CD8-positive, alpha-beta memory T cell (primary cell): ENCODE measurements at regions of chr1 and their contacts with region 1.

Region 1: DNA sequence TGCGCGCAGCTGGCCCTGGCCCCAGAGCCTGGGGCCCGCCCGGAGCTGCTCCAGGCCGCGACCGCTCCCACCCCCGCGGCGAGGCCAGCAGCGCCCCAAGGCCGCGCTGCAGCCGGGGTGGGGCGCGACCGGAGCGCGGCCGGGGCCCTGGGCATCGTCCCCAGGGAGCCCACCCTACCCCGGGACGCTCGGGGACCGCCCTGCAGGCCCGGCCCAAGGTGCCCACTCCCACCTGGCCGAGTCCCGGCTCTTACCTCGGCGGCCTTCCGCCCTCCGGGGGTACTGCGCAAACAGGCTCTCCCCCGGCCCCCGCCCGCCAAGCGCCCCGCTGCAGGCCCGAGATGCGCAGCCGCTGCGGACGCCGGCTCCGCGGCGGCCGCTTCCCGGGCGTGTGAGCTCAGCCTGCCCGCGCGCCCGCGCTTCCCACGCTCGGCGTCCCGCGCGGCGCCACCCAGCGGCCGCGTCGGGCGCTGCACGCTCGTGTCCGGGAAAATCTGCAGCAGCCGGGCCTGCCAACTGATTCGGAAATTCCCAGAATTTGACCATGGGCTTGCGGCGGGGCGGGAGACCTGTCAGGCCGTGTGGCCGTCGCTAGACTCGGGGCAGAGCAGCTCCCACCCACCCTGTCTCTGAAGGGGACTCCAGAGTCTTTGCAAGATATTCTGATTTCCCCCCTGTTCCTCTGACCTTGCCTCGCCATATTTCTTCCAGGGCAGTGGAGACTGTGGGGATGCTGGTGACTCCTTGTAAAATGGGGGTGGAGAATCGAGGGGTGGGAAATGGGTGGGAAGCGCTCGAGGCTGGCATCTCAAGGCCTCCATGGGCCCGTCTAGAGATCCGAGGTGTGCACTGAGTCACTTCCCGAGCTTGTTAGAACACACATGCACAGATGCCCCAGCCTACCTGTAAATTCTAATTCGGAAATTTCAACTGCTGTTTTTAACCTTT is 41.9 kb downstream of the CD34 start:
- DNase-seq: peak; percentile 66 to 81 (median 74)
- H3K4me3 ChIP-seq: peak overlapping the region; percentile 71
- H3K4me3 Mint-ChIP-seq: peak overlapping the region; percentile 93 to 98 (median 96)
- H3K27ac ChIP-seq: peak overlapping the region; percentile 83
- H3K27ac Mint-ChIP-seq: peak overlapping the region; percentile 66 to 97 (median 92)
- H3K4me1 ChIP-seq: peaks cover 84% of the 10 kb centered on the region
- H3K4me1 Mint-ChIP-seq: peaks cover 47 to 84% (median 48%) of the 10 kb centered on the region in 3 donors
- H3K27me3 ChIP-seq: no peaks in the 10 kb centered on the region
- H3K27me3 Mint-ChIP-seq: peaks cover 0 to 1% of the 10 kb centered on the region in 2 donors

Region 2: GRCh38 chr1:207762622-207763021 is 106.4 kb before region 1 on chr1:
- CTCF ChIA-PET with region 1: no interaction called
- POLR2A ChIA-PET with region 1: no interaction called
- DNase-seq: no peak
- H3K4me3 ChIP-seq: no peak overlapping the region
- H3K4me3 Mint-ChIP-seq: no peak overlapping the region
- H3K27ac ChIP-seq: no peak overlapping the region
- H3K27ac Mint-ChIP-seq: peak overlapping the region in 1 of 8 donors; percentile 33
- H3K4me1 ChIP-seq: no peaks in the 10 kb centered on the region
- H3K4me1 Mint-ChIP-seq: peaks cover 2 to 11% (median 11%) of the 10 kb centered on the region in 3 donors
- H3K27me3 ChIP-seq: no peaks in the 10 kb centered on the region
- H3K27me3 Mint-ChIP-seq: no peaks in the 10 kb centered on the region

Region 3: DNA sequence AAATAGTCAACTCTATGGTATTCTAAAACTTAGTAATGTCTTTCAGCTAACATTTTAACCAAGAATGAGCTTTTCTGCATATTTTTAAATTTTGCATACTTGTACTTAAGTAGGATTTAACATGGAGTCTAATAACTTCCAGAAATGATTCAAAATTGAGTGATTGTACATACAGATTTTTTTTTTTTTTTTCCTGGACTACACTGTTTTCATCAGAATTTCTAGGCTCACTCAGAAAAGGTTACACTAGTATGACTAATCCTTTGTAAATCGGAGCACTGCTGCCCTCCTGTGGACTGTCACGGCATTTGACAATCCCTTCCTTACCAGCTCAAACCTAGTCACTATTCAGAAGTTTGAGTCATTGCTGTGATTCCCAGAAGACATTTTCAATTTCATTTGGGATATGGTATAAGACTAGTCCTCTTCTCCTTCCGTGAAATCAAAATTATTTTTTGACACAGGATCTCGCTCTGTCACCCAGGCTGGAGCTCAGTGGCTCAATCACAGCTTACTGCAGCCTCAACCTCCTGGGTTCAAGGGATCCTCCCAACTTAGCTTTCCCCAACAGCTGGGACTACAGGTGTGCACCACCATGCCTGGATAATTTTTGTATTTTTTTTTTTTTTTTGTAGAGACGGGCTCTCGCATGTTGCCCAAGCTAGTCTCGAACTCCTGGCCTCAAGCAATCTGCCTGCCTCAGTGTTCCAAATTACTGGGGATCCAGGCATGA is 71.7 kb before region 1 on chr1:
- CTCF ChIA-PET with region 1: interaction called, 28 read pairs
- POLR2A ChIA-PET with region 1: interaction called, 3 read pairs
- DNase-seq: peak; percentile 39 to 82 (median 55)
- H3K4me3 ChIP-seq: no peak overlapping the region
- H3K4me3 Mint-ChIP-seq: no peak overlapping the region
- H3K27ac ChIP-seq: no peak overlapping the region
- H3K27ac Mint-ChIP-seq: peak overlapping the region in 2 of 8 donors; percentile 6 to 40
- H3K4me1 ChIP-seq: peaks cover 23% of the 10 kb centered on the region
- H3K4me1 Mint-ChIP-seq: peaks cover 41 to 51% (median 48%) of the 10 kb centered on the region in 3 donors
- H3K27me3 ChIP-seq: no peaks in the 10 kb centered on the region
- H3K27me3 Mint-ChIP-seq: no peaks in the 10 kb centered on the region

Region 4: DNA sequence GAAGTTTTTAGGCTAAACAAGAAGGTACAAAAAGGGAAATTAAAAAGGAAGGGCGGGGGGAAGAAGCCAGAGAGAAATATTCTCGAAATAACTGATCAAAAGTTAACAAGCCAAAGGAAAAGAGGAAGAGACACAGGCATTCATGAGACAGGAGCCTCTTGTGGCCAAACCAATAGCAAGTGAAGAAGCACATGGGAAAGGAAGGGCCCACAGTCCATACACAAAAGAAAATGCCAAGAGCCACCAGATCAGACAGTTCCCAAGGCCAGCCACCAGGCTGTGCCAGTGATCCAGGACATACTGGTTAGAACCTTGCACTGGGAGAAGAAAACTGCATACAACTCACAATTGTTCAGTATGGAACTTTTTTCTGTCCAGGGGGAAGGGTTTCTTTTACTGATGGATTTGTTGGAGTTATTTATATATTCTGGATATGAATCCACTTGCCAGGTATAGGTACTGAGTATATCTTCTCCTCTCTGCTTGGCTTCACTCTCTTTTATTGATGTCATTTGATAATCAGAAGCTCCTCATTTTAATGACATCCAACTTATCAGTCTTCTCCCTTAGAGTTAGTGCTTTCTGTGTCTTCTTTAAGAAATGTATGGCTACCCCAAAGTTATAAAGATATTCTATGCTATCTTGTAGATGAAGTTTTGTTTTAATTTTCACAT is 40.4 kb before region 1 on chr1:
- CTCF ChIA-PET with region 1: interaction called, 435 read pairs
- POLR2A ChIA-PET with region 1: interaction called, 29 read pairs
- DNase-seq: peak; percentile 32 to 73 (median 47)
- H3K4me3 ChIP-seq: no peak overlapping the region
- H3K4me3 Mint-ChIP-seq: no peak overlapping the region
- H3K27ac ChIP-seq: peak overlapping the region; percentile 48
- H3K27ac Mint-ChIP-seq: peak overlapping the region; percentile 65 to 98 (median 86)
- H3K4me1 ChIP-seq: peaks cover 88% of the 10 kb centered on the region
- H3K4me1 Mint-ChIP-seq: peaks cover 84 to 100% (median 98%) of the 10 kb centered on the region in 3 donors
- H3K27me3 ChIP-seq: no peaks in the 10 kb centered on the region
- H3K27me3 Mint-ChIP-seq: peaks cover 4% of the 10 kb centered on the region in 2 donors

Region 5: GRCh38 chr1:207853372-207853757 is 15.7 kb before region 1 on chr1:
- CTCF ChIA-PET with region 1: interaction called, 18 read pairs
- POLR2A ChIA-PET with region 1: interaction called, 3 read pairs
- DNase-seq: no peak
- H3K4me3 ChIP-seq: no peak overlapping the region
- H3K4me3 Mint-ChIP-seq: peak overlapping the region in 2 of 7 donors; percentile 30 to 76
- H3K27ac ChIP-seq: no peak overlapping the region
- H3K27ac Mint-ChIP-seq: peak overlapping the region in 4 of 8 donors; percentile 1 to 90 (median 36)
- H3K4me1 ChIP-seq: peaks cover 82% of the 10 kb centered on the region
- H3K4me1 Mint-ChIP-seq: peaks cover 67 to 90% (median 76%) of the 10 kb centered on the region in 3 donors
- H3K27me3 ChIP-seq: no peaks in the 10 kb centered on the region
- H3K27me3 Mint-ChIP-seq: no peaks in the 10 kb centered on the region

Region 6: GRCh38 chr1:207858806-207859205 is 10.2 kb before region 1 on chr1:
- CTCF ChIA-PET with region 1: interaction called, 18 read pairs
- POLR2A ChIA-PET with region 1: interaction called, 3 read pairs
- DNase-seq: no peak
- H3K4me3 ChIP-seq: no peak overlapping the region
- H3K4me3 Mint-ChIP-seq: no peak overlapping the region
- H3K27ac ChIP-seq: no peak overlapping the region
- H3K27ac Mint-ChIP-seq: no peak overlapping the region
- H3K4me1 ChIP-seq: peaks cover 79% of the 10 kb centered on the region
- H3K4me1 Mint-ChIP-seq: peaks cover 12 to 52% (median 35%) of the 10 kb centered on the region in 3 donors
- H3K27me3 ChIP-seq: no peaks in the 10 kb centered on the region
- H3K27me3 Mint-ChIP-seq: no peaks in the 10 kb centered on the region

Region 7: DNA sequence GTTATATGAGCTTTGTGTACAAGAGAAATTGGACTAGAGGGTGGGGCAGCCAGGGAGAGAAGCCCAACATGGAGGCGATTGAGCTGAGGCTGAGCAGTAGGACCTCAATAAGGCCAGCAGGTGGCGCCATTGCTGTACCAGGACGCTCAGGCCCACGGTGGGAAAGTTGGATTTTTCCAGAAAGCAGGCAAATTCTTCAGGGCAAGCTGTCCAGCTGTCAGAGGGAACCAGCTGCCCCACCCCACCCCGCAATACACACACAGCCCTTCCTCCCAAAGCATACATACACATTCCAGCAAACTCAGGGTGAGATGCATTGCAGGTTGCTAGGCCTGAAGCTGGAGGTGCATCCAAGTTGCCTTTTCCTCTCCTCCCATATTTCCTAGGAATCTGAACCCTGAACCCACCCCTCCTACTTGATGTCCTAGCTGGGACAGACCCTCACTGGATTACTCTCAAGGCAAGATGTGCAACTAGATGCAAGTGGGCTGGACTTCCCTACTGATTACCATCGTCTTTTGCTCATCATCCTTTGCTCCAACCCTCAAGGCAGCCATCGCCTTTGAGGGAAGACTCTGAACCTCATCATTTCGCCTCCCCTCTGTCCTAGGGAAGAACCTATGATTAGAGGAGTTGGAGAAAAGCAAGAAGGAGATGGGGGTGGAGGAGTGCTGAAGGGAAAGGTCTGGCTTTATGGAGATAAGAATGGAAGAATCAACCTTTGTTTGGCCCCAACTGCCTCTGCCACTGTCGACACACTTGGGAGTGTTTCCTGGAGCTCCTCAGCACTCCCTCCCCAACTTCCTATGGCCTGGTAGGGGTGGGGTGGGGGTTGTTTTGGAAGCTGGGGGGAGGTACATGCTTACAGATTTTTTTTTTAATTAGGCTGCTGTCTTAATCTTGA is 16.3 kb after region 1 on chr1:
- CTCF ChIA-PET with region 1: interaction called, 244 read pairs
- POLR2A ChIA-PET with region 1: interaction called, 14 read pairs
- DNase-seq: peak; percentile 58 to 79 (median 61)
- H3K4me3 ChIP-seq: no peak overlapping the region
- H3K4me3 Mint-ChIP-seq: peak overlapping the region in 3 of 7 donors; percentile 10 to 36 (median 21)
- H3K27ac ChIP-seq: no peak overlapping the region
- H3K27ac Mint-ChIP-seq: peak overlapping the region in 7 of 8 donors; percentile 59 to 96 (median 79)
- H3K4me1 ChIP-seq: peaks cover 28% of the 10 kb centered on the region
- H3K4me1 Mint-ChIP-seq: peaks cover 33 to 38% (median 37%) of the 10 kb centered on the region in 3 donors
- H3K27me3 ChIP-seq: no peaks in the 10 kb centered on the region
- H3K27me3 Mint-ChIP-seq: peaks cover 8 to 18% of the 10 kb centered on the region in 2 donors